Vagina (tissue), 2 donors: ENCODE measurements at regions of chr11 and their contacts with region 1.

Region 1: GRCh38 chr11:117217141-117218084 is 14.5 kb downstream of the PCSK7 start:
- DNase-seq: no peak
- H3K4me3 ChIP-seq: peak overlapping the region in 1 of 2 donors; percentile 26
- H3K27ac ChIP-seq: peak overlapping the region; percentile 81
- H3K4me1 ChIP-seq: peaks cover 37% of the 10 kb centered on the region
- H3K27me3 ChIP-seq: no peaks in the 10 kb centered on the region
- CTCF ChIP-seq: no peak
- POLR2A ChIP-seq: no peak

Region 2: GRCh38 chr11:117199061-117199915 is 18.1 kb before region 1 on chr11 and contains the start of gene TAGLN:
- intact Hi-C with region 1: loop called (anchors 2 kb)
- DNase-seq: no peak
- H3K4me3 ChIP-seq: peak within 1 kb of the TSS; percentile 46 to 54
- H3K27ac ChIP-seq: peak within 1 kb of the TSS; percentile 78
- H3K4me1 ChIP-seq: peaks cover 21% of the 10 kb centered on the region
- H3K27me3 ChIP-seq: no peaks in the 10 kb centered on the region
- CTCF ChIP-seq: no peak
- POLR2A ChIP-seq: no peak
- total RNA-seq, gene TAGLN: 1,935 TPM

Region 3: GRCh38 chr11:117668321-117668751 is 450.9 kb after region 1 on chr11:
- intact Hi-C with region 1: no loop called
- DNase-seq: no peak
- H3K4me3 ChIP-seq: no peak overlapping the region
- H3K27ac ChIP-seq: no peak overlapping the region
- H3K4me1 ChIP-seq: peaks cover 7% of the 10 kb centered on the region
- H3K27me3 ChIP-seq: no peaks in the 10 kb centered on the region
- CTCF ChIP-seq: no peak
- POLR2A ChIP-seq: no peak